ENCODE measurements at regions of chr10 and their contacts with region 1.

Region 1: GRCh38 chr10:81018708-81019365 is 481.1 kb downstream of the SH2D4B start:
- DNase-seq: peak; percentile 19
- ATAC-seq: peak; percentile 72
- H3K4me3 ChIP-seq: no peak overlapping the region
- H3K27ac ChIP-seq: no peak overlapping the region
- H3K4me1 ChIP-seq: no peaks in the 10 kb centered on the region
- H3K27me3 ChIP-seq: no peaks in the 10 kb centered on the region
- CTCF ChIP-seq: peak; percentile 56
- POLR2A ChIP-seq: no peak
- RAD21 ChIP-seq: 0 out of 2 replicates have a peak, but pooled peaks have one; percentile 12

Region 2: DNA sequence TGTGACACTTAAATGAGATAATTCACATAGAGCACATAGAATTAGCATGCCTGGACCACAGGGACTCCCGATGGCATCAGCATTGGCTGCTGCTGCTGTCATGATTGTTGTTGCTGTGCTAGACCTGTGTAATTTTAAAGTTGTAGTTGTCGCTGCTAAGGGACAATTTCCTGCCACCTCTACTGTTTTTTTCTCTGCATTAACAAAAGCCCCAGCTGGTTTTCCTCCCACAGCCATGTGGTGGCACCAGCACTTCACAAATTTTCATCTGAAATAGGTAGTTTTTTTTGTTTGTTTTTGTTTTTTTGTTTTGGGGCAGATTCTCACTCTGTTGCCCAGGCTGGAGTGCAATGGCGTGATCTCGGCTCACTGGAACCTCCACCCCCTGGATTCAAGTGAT is 635.8 kb before region 1 on chr10:
- CTCF ChIA-PET with region 1: interaction called, 3 read pairs
- POLR2A ChIA-PET with region 1: no interaction called
- dilution Hi-C with region 1: no loop called
- in situ Hi-C with region 1: no loop called
- intact Hi-C with region 1: loop called (anchors 5 kb)
- DNase-seq: peak; percentile 11
- ATAC-seq: peak; percentile 17; the same call in 1 of the 2 replicates
- H3K4me3 ChIP-seq: no peak overlapping the region
- H3K27ac ChIP-seq: no peak overlapping the region
- H3K4me1 ChIP-seq: no peaks in the 10 kb centered on the region
- H3K27me3 ChIP-seq: 0 out of 2 replicates have a peak, but pooled peaks cover 2% of the 10 kb centered on the region
- CTCF ChIP-seq: peak; percentile 50
- POLR2A ChIP-seq: no peak
- RAD21 ChIP-seq: peak; percentile 49

Region 3: DNA sequence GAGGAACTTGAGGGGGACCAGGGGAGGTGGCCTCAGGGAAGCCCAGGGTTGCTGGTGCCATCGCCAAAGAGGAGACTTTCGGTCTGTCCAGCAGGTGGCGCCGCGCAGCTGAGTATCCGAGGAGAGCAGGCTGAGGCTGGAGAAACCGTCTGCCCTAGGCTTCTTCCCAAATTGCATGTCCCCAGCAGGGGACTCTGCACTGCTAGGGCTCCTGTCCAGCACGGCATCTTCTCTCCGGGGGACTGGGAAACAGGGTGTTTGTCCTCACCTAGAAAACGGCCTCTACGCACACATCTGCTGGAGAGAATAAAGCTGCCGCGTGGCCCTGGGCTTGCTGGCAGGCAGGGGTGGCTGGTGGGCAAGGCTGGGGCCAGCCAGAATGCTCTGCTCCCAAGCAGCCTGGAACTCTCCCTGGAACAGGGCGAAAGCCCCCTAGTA is 319.2 kb before region 1 on chr10:
- CTCF ChIA-PET with region 1: no interaction called
- POLR2A ChIA-PET with region 1: no interaction called
- dilution Hi-C with region 1: no loop called
- in situ Hi-C with region 1: no loop called
- intact Hi-C with region 1: loop called (anchors 1 kb)
- DNase-seq: peak; percentile 50
- ATAC-seq: peak; percentile 98
- H3K4me3 ChIP-seq: no peak overlapping the region
- H3K27ac ChIP-seq: no peak overlapping the region
- H3K4me1 ChIP-seq: no peaks in the 10 kb centered on the region
- H3K27me3 ChIP-seq: no peaks in the 10 kb centered on the region
- CTCF ChIP-seq: peak; percentile 71
- POLR2A ChIP-seq: no peak
- RAD21 ChIP-seq: peak; percentile 62

Region 4: GRCh38 chr10:80952436-80952835 is 66.4 kb before region 1 on chr10:
- CTCF ChIA-PET with region 1: no interaction called
- POLR2A ChIA-PET with region 1: no interaction called
- dilution Hi-C with region 1: no loop called
- in situ Hi-C with region 1: no loop called
- intact Hi-C with region 1: no loop called
- DNase-seq: no peak
- ATAC-seq: no peak
- H3K4me3 ChIP-seq: no peak overlapping the region
- H3K27ac ChIP-seq: no peak overlapping the region
- H3K4me1 ChIP-seq: no peaks in the 10 kb centered on the region
- H3K27me3 ChIP-seq: no peaks in the 10 kb centered on the region
- CTCF ChIP-seq: no peak
- POLR2A ChIP-seq: no peak
- RAD21 ChIP-seq: no peak